CD4-positive, alpha-beta memory T cell (primary cell): ENCODE measurements at regions of chr14 and their contacts with region 1.

Region 1: GRCh38 chr14:49019467-49020115 is 566.6 kb downstream of the RPS29 start:
- DNase-seq: no peak
- H3K4me3 ChIP-seq: no peak overlapping the region
- H3K4me3 Mint-ChIP-seq: no peak overlapping the region
- H3K27ac ChIP-seq: no peak overlapping the region
- H3K27ac Mint-ChIP-seq: no peak overlapping the region
- H3K4me1 ChIP-seq: no peaks in the 10 kb centered on the region
- H3K4me1 Mint-ChIP-seq: no peaks in the 10 kb centered on the region
- H3K27me3 ChIP-seq: no peaks in the 10 kb centered on the region
- H3K27me3 Mint-ChIP-seq: no peaks in the 10 kb centered on the region

Region 2: GRCh38 chr14:48876806-48877340 is 142.7 kb before region 1 on chr14:
- CTCF ChIA-PET with region 1: no interaction called
- POLR2A ChIA-PET with region 1: no interaction called
- intact Hi-C with region 1: loop called (anchors 5 kb)
- DNase-seq: no peak
- H3K4me3 ChIP-seq: no peak overlapping the region
- H3K4me3 Mint-ChIP-seq: no peak overlapping the region
- H3K27ac ChIP-seq: no peak overlapping the region
- H3K27ac Mint-ChIP-seq: no peak overlapping the region
- H3K4me1 ChIP-seq: no peaks in the 10 kb centered on the region
- H3K4me1 Mint-ChIP-seq: no peaks in the 10 kb centered on the region
- H3K27me3 ChIP-seq: no peaks in the 10 kb centered on the region
- H3K27me3 Mint-ChIP-seq: no peaks in the 10 kb centered on the region